Activated naive CD4-positive, alpha-beta T cell treated with anti-CD3 and anti-CD28 coated beads for 36 hours (primary cell): ENCODE measurements at regions of chr4 and their contacts with region 1.

Region 1: GRCh38 chr4:48830706-48831531 is at the start of gene OCIAD1:
- DNase-seq: peak; percentile 96
- H3K4me3 Mint-ChIP-seq: peak within 1 kb of the TSS; percentile 100
- H3K27ac Mint-ChIP-seq: peak within 1 kb of the TSS; percentile 100
- H3K4me1 Mint-ChIP-seq: peaks cover 23% of the 10 kb centered on the region
- H3K27me3 Mint-ChIP-seq: peaks cover 6% of the 10 kb centered on the region
- total RNA-seq, gene OCIAD1: 91.9 to 99.0 TPM

Region 2: GRCh38 chr4:47914220-47914925 is 916.5 kb before region 1 on chr4 and contains the start of gene NFXL1:
- CTCF ChIA-PET with region 1: no interaction called
- intact Hi-C with region 1: loop called (anchors 2 kb)
- DNase-seq: peak; percentile 97
- H3K4me3 Mint-ChIP-seq: peak within 1 kb of the TSS; percentile 90
- H3K27ac Mint-ChIP-seq: peak within 1 kb of the TSS; percentile 91
- H3K4me1 Mint-ChIP-seq: peaks cover 29% of the 10 kb centered on the region
- H3K27me3 Mint-ChIP-seq: no peaks in the 10 kb centered on the region
- total RNA-seq, gene NFXL1: 10.4 to 11.4 TPM

Region 3: GRCh38 chr4:48578132-48578968 is 252.6 kb before region 1 on chr4:
- CTCF ChIA-PET with region 1: no interaction called
- intact Hi-C with region 1: loop called (anchors 5 kb)
- DNase-seq: peak; percentile 72
- H3K4me3 Mint-ChIP-seq: no peak overlapping the region
- H3K27ac Mint-ChIP-seq: no peak overlapping the region
- H3K4me1 Mint-ChIP-seq: peaks cover 7% of the 10 kb centered on the region
- H3K27me3 Mint-ChIP-seq: no peaks in the 10 kb centered on the region

Region 4: DNA sequence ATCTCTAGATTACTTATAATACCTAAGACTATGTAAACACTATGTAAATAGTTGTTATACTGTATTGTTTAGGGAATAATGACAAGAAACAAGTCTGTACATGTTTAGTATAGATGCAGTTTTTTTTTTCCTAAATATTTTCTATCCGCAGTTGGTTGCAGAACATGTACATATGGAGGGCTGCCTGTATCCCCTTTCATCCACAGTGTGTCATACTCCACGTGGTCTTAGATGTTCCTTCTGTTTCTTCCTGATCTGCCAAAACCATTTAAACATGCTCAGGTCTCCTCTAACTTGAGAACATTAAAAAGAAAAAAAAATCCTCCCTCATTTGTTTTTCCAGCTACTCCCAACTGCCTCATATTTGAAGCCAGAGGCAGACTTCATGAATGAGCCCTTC is 13.9 kb after region 1 on chr4:
- CTCF ChIA-PET with region 1: interaction called, 3 read pairs
- intact Hi-C with region 1: loop called (anchors 1 kb)
- DNase-seq: no peak
- H3K4me3 Mint-ChIP-seq: no peak overlapping the region
- H3K27ac Mint-ChIP-seq: no peak overlapping the region
- H3K4me1 Mint-ChIP-seq: peaks cover 11% of the 10 kb centered on the region
- H3K27me3 Mint-ChIP-seq: no peaks in the 10 kb centered on the region

Region 5: GRCh38 chr4:48851651-48852050 is 20.7 kb after region 1 on chr4:
- CTCF ChIA-PET with region 1: no interaction called
- intact Hi-C with region 1: loop called (anchors 1 kb)
- DNase-seq: no peak
- H3K4me3 Mint-ChIP-seq: no peak overlapping the region
- H3K27ac Mint-ChIP-seq: peak overlapping the region; percentile 10
- H3K4me1 Mint-ChIP-seq: peaks cover 28% of the 10 kb centered on the region
- H3K27me3 Mint-ChIP-seq: no peaks in the 10 kb centered on the region

Region 6: DNA sequence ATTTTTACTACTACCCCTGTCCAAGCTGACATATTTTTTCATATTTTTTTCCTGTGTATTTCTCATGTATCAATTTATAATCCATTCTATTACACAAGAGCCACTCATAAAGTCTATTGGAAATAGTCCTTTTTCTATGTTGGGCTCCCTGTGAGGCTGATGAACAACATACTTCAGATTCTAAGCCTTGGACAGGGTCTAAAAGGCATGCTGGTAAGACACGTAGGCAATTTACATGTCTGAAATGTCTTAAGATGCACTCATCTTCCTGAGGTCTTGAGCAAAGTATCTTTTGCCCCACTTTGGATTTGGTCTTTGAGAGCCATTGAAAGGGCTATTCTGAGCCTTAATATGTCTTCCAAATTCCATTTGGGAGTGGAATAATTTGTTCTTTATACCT is 31.7 kb after region 1 on chr4:
- CTCF ChIA-PET with region 1: no interaction called
- intact Hi-C with region 1: no loop called
- DNase-seq: no peak
- H3K4me3 Mint-ChIP-seq: no peak overlapping the region
- H3K27ac Mint-ChIP-seq: no peak overlapping the region
- H3K4me1 Mint-ChIP-seq: peaks cover 4% of the 10 kb centered on the region
- H3K27me3 Mint-ChIP-seq: no peaks in the 10 kb centered on the region

Region 7: GRCh38 chr4:48898733-48899431 is 68.0 kb after region 1 on chr4:
- CTCF ChIA-PET with region 1: no interaction called
- intact Hi-C with region 1: loop called (anchors 2 kb)
- DNase-seq: no peak
- H3K4me3 Mint-ChIP-seq: peak overlapping the region; percentile 16
- H3K27ac Mint-ChIP-seq: peak overlapping the region; percentile 77
- H3K4me1 Mint-ChIP-seq: peaks cover 35% of the 10 kb centered on the region
- H3K27me3 Mint-ChIP-seq: no peaks in the 10 kb centered on the region

Region 8: DNA sequence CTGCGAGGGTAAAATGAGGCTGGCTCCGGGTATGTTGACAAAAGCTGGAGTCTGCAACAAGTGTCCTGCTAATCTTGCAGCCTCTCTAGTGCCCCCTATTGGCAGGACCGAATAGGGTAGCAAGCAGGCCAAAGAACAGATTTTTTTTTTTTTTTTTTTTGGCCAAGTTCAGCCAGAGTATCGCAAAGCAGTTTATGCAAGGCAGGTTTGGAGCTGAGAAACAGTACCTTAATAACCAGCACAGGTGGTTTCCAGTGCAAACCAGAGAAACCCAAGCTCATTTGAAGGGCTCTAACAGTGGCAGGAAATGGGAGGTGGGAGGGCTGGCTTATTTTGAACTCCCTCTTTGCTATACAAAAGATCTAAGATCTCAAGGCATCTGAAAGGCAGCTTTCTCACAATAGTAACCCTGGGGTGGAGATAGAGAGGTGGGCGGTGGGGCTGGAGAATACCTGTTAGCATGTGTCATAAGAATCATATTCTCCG is 113.9 kb after region 1 on chr4:
- CTCF ChIA-PET with region 1: interaction called, 4 read pairs
- intact Hi-C with region 1: loop called (anchors 10 kb)
- DNase-seq: peak; percentile 81
- H3K4me3 Mint-ChIP-seq: no peak overlapping the region
- H3K27ac Mint-ChIP-seq: no peak overlapping the region
- H3K4me1 Mint-ChIP-seq: peaks cover 22% of the 10 kb centered on the region
- H3K27me3 Mint-ChIP-seq: no peaks in the 10 kb centered on the region